ENCODE measurements at regions of chr7 and their contacts with region 1.

Region 1: GRCh38 chr7:2567679-2568278 is 9.0 kb downstream of the IQCE start:
- DNase-seq: no peak

Region 2: DNA sequence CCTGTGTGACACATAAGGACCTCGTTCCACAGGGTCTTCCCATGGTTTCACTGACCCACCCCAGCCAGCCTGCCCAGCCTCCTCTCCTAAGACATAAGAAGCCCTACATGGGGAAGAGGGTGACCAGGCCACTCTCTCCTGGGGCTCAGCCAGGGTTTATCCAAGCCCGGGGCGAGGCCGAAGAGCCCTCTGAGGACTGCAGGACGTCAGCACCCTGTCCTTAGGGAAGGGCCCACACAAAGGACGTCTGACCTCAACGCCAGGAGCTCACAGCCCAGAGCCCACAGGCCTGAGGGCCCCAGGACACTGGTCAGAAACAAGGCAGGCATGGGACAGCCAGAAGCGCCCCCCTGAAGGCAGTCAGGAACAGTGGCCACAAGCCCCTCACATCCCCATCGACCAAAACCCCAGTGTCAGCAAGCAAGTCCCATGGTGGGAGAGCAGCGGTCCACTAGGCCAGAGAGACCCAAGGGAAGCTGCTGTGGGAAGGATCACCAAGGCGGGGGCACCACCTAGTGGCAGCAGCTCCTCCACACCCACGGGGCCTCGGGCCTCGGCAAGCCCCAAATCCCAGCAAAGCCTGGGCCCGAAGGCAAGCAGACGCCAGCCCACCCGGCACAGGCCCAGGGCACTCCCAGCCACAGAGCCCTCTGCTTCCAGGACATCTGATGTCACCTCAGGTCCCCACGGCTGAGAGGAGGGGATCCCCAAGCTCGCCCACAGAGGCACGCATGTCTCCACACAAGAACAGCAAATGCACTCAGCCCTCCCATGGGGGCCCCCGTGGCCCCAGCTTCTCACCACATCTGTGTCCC is 358.4 kb before region 1 on chr7:
- intact Hi-C with region 1: no loop called
- DNase-seq: no peak

Region 3: DNA sequence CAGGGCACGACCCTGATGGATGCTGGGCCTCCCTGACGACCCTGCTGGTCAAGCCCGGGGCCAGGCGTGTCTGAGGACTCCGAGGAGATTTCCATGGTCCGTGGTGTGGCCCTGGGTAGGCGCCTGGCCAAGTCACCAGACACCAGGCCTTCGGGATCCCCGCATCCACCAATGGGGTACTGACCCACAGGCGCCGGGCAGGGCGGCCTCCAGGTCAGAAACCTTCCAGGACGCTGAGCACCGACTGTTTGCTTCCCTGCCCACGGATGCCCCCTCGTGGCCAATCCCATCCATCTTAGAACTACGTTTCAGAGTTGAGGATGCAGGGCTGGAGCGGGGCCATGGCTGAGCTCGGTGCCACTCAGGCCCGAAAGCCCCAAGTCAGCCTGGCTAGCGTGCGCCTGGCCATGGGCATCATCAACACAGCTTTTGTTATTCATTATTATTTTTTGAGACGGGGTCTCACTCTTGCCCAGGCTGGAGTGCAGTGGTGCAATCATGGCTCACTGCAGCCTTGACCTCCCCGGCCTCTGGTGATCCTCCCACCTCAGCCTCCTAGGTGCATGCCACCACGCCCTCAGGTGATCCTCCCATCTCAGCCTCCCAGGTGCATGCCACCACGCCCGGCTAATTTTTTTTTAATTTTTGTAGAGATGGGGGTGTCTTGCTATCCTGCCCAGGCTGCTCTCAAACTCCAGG is 113.2 kb after region 1 on chr7:
- intact Hi-C with region 1: loop called (anchors 2 kb)
- DNase-seq: peak; percentile 91

Region 4: DNA sequence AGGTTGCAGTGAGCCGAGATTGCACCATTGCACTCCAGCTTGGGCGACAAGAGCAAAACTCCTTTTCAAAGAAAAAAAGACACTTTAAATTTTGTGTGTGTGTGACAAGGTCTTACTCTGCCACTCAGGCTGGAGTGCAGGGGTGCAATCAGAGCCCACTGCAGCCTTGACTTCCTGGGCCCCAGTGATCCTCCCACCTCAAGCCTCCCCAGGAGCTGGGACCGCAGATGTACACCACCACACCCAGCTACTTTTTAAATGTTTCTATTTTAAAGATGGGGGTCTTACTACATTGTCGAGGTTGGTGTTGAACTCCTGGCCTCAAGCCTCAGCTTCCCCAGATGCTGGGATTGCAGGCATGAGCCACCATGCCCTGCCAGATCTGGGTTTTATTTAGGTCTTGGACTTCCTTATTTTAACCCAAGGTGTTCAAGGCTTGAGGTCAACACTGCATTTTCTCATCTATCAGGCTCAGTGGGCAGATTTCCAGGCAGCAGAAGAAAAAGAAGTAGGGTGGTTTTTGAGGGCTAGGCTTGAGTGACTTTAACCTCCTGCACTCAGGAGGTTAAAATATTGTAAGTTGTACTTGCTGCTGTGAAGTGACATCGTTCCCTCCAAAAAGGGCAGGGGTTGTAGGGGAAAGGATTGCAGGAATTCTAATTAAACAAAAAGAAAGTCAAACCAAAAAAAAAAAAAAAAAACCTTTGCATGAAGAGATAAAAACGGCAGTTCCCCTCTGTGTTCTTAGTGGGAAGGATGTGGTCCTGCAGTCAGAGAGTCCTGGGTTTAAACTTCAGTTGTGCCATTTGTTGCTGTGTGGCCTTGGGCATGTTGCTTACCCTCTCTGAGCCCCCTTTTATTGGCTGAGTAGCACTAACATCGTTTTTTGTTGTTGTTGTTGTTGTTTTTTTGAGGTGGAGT is 404.4 kb after region 1 on chr7:
- intact Hi-C with region 1: no loop called
- DNase-seq: peak; percentile 17

Measured in cardiac septum (tissue), 1 donor.